ENCODE measurements at regions of chr19 and their contacts with region 1.

Region 1: DNA sequence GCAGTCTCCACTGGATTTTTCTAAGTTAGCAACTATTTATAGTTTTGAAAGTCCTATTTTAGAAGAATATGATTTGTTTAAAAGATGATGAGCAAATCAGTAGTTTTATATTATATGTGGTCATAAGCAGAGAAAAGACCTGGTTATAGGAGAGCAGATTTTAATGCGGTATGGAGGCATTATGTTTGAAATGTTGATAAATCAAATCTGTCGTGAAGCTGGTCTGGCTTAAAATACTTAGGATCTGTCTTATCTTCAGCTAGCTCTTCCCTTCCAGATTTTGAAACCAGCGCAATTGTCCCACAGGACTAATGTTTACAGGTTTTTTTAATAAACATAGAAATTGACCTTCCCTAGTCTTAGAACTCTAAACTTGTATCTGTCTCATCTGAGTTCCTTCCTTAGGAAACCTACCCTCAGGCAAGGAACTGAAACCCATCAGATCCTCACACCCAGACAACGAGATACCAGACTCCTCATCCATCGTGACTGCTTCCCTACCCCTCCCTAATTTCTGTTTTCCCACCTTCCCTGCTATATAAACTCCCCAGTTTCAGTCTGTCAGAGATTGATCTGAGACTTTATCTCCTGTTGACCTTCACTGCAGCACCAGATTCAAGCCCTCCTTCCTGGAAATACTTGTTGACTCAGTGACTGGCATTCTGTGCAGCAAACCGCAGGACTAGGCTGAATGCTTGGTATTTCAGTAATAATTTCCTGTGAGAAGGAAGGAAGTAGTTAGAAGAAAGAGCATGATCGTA is 37.8 kb upstream of the CXCL17 start:
- DNase-seq: no peak
- ATAC-seq: peak; percentile 68
- H3K4me3 Mint-ChIP-seq: peak overlapping the region; percentile 36
- H3K27ac Mint-ChIP-seq: peak overlapping the region; percentile 69
- H3K4me1 Mint-ChIP-seq: peaks cover 28% of the 10 kb centered on the region
- H3K27me3 Mint-ChIP-seq: no peaks in the 10 kb centered on the region

Region 2: DNA sequence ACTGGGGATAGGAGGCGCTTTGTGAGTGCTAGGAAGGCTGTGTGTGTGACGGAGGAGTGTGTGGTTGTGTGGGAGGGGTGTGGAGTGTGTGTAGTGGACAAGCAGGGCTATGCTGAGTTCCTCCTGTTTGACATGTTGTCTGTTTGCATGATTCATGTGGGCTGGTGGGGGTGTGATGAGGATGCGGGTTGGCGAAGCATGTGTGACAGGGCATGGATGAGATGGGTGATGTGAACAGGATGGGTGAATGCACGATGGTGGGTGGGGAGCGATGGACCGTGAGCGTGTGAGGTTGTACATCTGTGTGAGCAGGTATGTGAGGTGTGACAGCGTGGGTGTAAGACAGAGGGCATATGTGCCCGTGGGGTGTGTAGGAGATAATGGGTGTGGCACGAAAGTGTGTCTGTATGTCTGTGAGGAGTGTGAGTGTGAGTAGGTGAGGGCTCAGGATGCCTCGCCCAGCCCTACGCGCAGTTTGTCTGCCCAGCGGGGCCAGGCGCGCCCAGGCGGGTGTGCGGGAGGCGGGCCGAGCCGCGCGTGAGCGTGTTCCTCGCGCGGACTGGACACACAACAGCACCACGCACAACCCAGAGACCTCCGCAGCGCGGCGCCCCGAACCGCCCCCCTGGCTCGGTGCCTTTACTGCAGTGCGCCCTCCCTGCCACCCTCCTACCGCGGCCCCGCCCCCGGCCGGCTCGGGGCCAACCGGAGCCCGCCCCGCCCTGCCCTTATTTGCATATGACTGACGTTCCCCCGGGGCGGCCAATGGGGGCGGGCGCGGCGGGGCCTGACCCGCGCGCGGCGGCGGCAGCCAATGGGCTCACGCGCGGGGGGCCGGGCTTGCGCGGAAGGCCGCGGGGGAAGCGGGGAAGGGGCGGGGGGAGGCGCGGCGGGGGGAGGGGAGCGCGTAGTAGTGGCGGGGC is 197.1 kb before region 1 on chr19:
- POLR2A ChIA-PET with region 1: no interaction called
- DNase-seq: peak; percentile 97
- ATAC-seq: peak; percentile 66
- H3K4me3 Mint-ChIP-seq: no peak overlapping the region
- H3K27ac Mint-ChIP-seq: no peak overlapping the region
- H3K4me1 Mint-ChIP-seq: peaks cover 40% of the 10 kb centered on the region
- H3K27me3 Mint-ChIP-seq: no peaks in the 10 kb centered on the region

Region 3: DNA sequence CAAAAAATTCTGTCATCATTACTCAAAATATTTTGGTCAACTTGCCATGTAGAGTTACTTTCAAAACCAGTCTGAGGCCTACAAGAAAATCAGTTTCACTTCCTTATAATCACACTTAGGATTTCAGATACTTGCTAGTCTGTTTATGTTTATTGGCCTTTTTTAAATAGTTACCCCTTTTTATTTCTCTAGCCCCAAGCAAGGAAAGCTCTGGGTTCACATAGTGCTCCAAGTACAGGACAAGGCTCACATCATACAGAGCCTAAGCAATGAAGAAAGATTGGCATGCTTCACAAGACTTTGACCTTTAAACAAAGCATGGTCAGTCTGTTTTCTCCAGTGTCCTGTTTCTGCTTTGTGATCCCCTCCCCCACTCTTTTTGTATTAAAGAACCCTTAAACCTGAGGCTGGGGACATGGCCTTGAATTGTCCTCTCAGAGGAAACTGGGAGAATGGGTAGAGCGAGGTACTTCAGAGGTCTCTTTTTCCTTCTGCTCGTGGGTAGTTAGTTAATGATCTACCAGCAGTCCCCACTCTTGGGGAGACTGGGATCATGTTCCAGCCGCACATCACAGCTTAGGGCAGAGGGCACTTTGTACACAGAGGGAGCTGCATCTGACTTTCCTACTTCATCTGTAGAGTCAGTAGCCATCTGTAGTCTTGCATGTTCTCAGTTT is 17.1 kb after region 1 on chr19:
- POLR2A ChIA-PET with region 1: interaction called, 10 read pairs
- DNase-seq: no peak
- ATAC-seq: no peak
- H3K4me3 Mint-ChIP-seq: peak overlapping the region; percentile 3
- H3K27ac Mint-ChIP-seq: peak overlapping the region; percentile 33
- H3K4me1 Mint-ChIP-seq: peaks cover 37% of the 10 kb centered on the region
- H3K27me3 Mint-ChIP-seq: no peaks in the 10 kb centered on the region